Endothelial cell of umbilical vein (primary cell): ENCODE measurements at regions of chr13 and their contacts with region 1.

Region 1: DNA sequence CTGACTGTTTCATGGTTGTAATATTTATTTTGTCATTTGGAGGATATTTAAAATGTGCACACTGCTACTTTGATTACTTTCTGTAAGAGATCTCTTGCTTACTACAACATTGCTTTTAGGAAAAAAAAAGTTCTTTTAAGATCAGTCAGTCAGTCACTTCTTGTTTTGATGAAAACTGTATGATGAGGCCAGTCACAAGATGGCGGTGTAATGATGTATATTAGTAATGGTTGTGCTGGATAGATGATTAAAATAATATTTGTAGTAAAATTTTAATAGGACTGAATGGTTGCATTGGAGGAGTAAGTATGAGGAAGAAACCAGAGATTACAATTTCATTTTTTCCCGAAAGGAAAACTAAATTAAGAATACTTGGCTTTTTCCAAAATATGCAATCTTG is 2411.1 kb downstream of the PCDH9 start:
- DNase-seq: peak; percentile 20
- H3K4me3 ChIP-seq: no peak overlapping the region
- H3K27ac ChIP-seq: no peak overlapping the region
- H3K4me1 ChIP-seq: peaks cover 3% of the 10 kb centered on the region
- H3K27me3 ChIP-seq: no peaks in the 10 kb centered on the region
- CTCF ChIP-seq: no peak
- POLR2A ChIP-seq: no peak

Region 2: DNA sequence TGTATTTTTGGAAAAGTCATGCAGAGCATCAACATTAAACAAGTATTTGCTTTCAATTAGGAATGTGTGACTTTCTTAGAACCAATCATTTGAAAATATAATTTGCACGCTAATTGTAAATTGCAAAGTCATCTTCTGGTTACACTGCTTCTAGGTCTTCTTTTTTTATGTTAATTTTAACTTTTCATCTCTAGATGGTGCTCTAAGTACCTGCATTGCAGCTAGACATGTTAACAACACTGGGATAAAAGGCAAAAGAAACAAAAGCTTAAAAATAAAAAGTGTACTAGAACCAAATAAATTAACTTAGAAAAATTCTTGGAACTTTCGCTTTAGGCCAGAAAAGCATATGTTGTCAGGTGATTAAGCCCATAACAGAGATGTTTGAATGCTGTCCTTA is 347.2 kb before region 1 on chr13:
- CTCF ChIA-PET with region 1: interaction called, 7 read pairs
- POLR2A ChIA-PET with region 1: no interaction called
- dilution Hi-C with region 1: no loop called
- intact Hi-C with region 1: loop called (anchors 10 kb)
- DNase-seq: peak; percentile 66
- H3K4me3 ChIP-seq: no peak overlapping the region
- H3K27ac ChIP-seq: no peak overlapping the region
- H3K4me1 ChIP-seq: no peaks in the 10 kb centered on the region
- H3K27me3 ChIP-seq: no peaks in the 10 kb centered on the region
- CTCF ChIP-seq: peak in 1 of 2 donors; percentile 22
- POLR2A ChIP-seq: no peak

Region 3: GRCh38 chr13:65638572-65639168 is 819.6 kb after region 1 on chr13:
- CTCF ChIA-PET with region 1: interaction called, 5 read pairs
- POLR2A ChIA-PET with region 1: no interaction called
- dilution Hi-C with region 1: no loop called
- intact Hi-C with region 1: loop called (anchors 2 kb)
- DNase-seq: peak; percentile 51
- H3K4me3 ChIP-seq: no peak overlapping the region
- H3K27ac ChIP-seq: no peak overlapping the region
- H3K4me1 ChIP-seq: no peaks in the 10 kb centered on the region
- H3K27me3 ChIP-seq: no peaks in the 10 kb centered on the region
- CTCF ChIP-seq: peak; percentile 54 to 66
- POLR2A ChIP-seq: no peak